GM18951 (cell line): ENCODE measurements at regions of chr7 and their contacts with region 1.

Region 1: DNA sequence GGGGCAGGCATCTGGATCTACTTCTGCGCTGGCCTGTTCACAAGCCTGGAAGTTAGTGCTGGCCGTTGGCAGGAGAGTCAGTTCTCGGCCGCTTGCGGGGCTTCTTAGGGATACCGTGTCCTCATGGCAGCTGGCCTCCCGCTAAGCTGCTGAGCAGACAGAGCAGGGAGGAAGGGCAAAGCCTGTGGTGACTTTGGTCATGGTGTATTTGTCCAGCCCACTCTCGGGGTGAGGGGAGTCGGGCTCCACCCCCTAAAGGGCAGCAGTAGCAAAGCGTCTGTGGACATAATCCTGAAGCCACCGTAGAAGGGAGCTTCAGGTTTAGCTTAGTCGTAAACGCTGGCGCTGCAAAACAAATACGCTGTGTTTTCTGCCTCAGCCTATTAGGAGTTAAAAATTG is 12.2 kb downstream of the UBE3C start:
- POLR2A ChIP-seq: no peak

Region 2: GRCh38 chr7:156999611-157000046 is 151.3 kb before region 1 on chr7:
- in situ Hi-C with region 1: loop called (anchors 10 kb)
- POLR2A ChIP-seq: no peak

Region 3: DNA sequence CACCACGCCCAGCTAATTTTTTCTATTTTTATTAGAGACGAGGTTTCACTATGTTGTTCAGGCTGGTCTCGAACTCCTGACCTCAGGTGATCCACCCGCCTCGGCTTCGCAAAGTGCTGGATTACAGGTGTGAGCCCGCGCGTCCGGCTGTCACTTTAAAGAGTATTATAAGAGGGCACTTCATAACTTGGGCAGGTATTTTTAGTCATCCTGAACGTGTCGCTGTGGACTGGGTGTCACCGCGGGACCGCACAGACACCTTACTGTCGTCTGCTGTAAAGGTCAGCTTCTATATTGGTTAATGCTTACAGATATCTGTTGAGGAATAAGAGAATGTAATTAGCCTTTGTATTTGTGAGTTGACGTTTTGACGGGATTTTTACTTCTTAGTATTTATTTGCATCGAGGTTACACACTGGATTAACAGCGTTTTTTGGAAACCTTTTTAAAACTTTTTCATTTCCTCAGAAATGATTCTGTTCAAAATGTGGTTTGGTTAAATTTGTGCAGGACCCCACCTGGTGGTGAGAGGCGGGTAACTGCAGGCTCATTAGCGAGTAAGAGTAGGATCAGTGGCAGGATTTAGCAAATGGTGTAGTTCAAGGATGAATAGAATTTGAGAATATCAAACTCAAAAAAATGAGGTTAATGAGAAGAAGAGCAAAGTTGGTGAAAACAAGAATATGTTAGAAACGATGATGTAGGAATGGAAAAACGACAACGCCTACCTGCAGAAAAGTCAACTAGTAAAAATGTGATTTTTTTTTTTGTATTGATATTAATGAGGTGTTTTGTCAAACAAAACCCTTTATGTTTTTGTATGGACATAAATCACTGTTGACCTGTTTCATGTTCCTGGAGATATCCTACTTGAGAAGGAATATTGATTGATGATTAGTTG is 189.1 kb after region 1 on chr7:
- in situ Hi-C with region 1: no loop called
- POLR2A ChIP-seq: no peak